ENCODE measurements at regions of chr1 and their contacts with region 1.

Region 1: GRCh38 chr1:54488779-54489626 is 59.0 kb upstream of the ACOT11 start:
- DNase-seq: peak; percentile 80
- H3K4me3 ChIP-seq: peak overlapping the region; percentile 41 to 85 (median 66)
- H3K27ac ChIP-seq: peak overlapping the region; percentile 87
- H3K4me1 ChIP-seq: peaks cover 17% of the 10 kb centered on the region
- H3K27me3 ChIP-seq: no peaks in the 10 kb centered on the region
- CTCF ChIP-seq: peak; percentile 88 to 91
- POLR2A ChIP-seq: no peak

Region 2: GRCh38 chr1:53945433-53946251 is 543.4 kb before region 1 on chr1 and contains the start of gene IFT25:
- CTCF ChIA-PET with region 1: no interaction called
- POLR2A ChIA-PET with region 1: no interaction called
- dilution Hi-C with region 1: no loop called
- intact Hi-C with region 1: loop called (anchors 2 kb)
- DNase-seq: peak; percentile 95
- H3K4me3 ChIP-seq: peak within 1 kb of the TSS; percentile 88 to 95 (median 91)
- H3K27ac ChIP-seq: peak within 1 kb of the TSS; percentile 43
- H3K4me1 ChIP-seq: peaks cover 20% of the 10 kb centered on the region
- H3K27me3 ChIP-seq: no peaks in the 10 kb centered on the region
- CTCF ChIP-seq: no peak
- POLR2A ChIP-seq: peak; percentile 77
- total RNA-seq, gene IFT25: 31.4 and 34.0 TPM in 2 replicates

Region 3: GRCh38 chr1:54121482-54122134 is 367.4 kb before region 1 on chr1:
- CTCF ChIA-PET with region 1: interaction called, 122 read pairs
- POLR2A ChIA-PET with region 1: no interaction called
- dilution Hi-C with region 1: no loop called
- intact Hi-C with region 1: loop called (anchors 1 kb)
- DNase-seq: peak; percentile 74
- H3K4me3 ChIP-seq: peak overlapping the region in 1 of 3 experiments; percentile 2
- H3K27ac ChIP-seq: no peak overlapping the region
- H3K4me1 ChIP-seq: peaks cover 3% of the 10 kb centered on the region
- H3K27me3 ChIP-seq: no peaks in the 10 kb centered on the region
- CTCF ChIP-seq: peak; percentile 77 to 88
- POLR2A ChIP-seq: no peak

Region 4: DNA sequence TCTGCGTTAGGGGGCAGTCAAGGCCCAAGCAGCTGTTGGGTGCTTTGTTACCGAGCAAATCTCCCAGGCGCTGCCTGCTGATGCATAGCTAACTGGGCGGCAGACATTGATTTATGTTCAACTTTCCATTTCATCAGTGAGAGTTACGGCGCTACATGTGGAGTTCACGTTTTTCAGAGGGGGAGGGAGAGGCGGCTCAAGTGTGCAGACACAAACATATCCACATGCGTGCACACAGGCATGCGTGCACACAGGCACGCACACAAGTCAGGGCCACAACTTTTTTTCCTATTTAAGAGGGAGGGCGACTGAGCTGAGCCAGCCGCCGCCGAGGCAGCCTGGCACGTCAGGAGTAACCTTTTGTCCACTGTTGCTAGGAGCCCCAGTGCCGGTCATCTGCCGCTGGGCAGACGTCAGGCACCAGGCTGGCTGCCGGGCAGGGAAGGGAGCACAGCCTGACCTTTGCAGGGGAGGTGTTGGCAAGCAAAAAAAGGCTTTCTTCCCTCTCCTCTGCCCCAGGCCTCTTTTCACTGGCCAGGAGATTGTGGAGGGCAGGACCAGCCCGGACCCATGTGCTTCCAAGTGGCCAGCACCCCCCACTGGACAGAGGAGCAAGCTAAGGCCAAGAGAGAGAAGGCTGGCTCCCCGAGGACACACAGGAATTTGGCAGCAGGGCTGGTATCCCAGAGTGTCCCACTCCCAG is 215.8 kb before region 1 on chr1:
- CTCF ChIA-PET with region 1: interaction called, 13 read pairs
- POLR2A ChIA-PET with region 1: no interaction called
- dilution Hi-C with region 1: no loop called
- intact Hi-C with region 1: loop called (anchors 1 kb)
- DNase-seq: peak; percentile 82
- H3K4me3 ChIP-seq: no peak overlapping the region
- H3K27ac ChIP-seq: peak overlapping the region; percentile 30
- H3K4me1 ChIP-seq: peaks cover 19% of the 10 kb centered on the region
- H3K27me3 ChIP-seq: no peaks in the 10 kb centered on the region
- CTCF ChIP-seq: peak; percentile 7 to 62
- POLR2A ChIP-seq: no peak

Region 5: DNA sequence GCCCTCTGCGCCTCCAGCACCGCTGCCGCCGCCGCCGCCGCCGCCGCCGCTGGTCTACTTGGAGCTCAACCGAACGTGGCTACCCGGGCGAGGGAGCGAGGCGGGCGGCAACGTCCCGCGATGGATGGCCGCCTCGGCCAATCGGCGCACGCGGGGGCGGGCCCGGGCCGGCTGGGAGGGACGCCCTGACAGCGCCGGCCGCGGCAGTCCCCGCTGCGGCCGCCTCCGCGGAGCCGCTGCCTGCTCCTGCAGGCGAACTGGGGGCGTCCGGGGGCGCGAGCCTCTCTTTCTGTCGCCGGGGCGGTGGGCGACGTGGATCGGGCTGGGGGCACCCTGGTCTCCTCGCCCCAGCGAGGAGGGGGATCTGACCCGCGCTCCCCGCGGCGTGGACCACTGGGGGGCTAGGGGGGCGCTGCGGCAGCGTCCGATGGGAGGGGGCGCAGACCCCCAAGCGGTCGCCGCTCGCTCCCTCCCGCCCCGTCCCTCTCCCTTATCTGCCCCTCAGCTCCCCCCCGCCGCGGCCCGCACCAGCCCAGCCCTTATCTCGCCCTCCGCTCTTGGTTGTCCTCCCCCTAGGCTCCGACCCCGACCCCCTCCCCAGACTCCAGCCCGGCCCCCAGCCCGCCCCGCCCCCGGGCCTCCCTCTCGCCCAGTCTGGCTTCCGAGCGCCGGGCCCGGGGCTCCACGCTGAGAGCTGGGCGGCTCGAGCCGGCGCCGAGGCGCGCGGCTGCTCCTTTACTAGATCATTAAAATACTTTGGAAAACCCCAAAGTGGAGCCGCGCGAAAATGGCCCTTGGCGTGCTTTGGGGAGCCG is 82.5 kb before region 1 on chr1 and contains the start of gene SSBP3:
- CTCF ChIA-PET with region 1: interaction called, 109 read pairs
- POLR2A ChIA-PET with region 1: interaction called, 9 read pairs
- dilution Hi-C with region 1: no loop called
- intact Hi-C with region 1: loop called (anchors 1 kb)
- DNase-seq: peak; percentile 95
- H3K4me3 ChIP-seq: peak within 1 kb of the TSS; percentile 71 to 85 (median 80)
- H3K27ac ChIP-seq: peak within 1 kb of the TSS; percentile 61
- H3K4me1 ChIP-seq: peaks cover 41% of the 10 kb centered on the region
- H3K27me3 ChIP-seq: no peaks in the 10 kb centered on the region
- CTCF ChIP-seq: peak in 1 of 2 donors; percentile 6
- POLR2A ChIP-seq: no peak
- total RNA-seq, gene SSBP3: 49.5 and 59.4 TPM in 2 replicates

Region 6: GRCh38 chr1:54499360-54500106 is 10.5 kb after region 1 on chr1:
- CTCF ChIA-PET with region 1: interaction called, 26 read pairs
- POLR2A ChIA-PET with region 1: no interaction called
- dilution Hi-C with region 1: no loop called
- intact Hi-C with region 1: no loop called
- DNase-seq: peak; percentile 43
- H3K4me3 ChIP-seq: peak overlapping the region; percentile 17 to 27 (median 26)
- H3K27ac ChIP-seq: no peak overlapping the region
- H3K4me1 ChIP-seq: peaks cover 4% of the 10 kb centered on the region
- H3K27me3 ChIP-seq: peaks cover 8 to 9% of the 10 kb centered on the region in 2 experiments
- CTCF ChIP-seq: peak in 1 of 2 donors; percentile 51
- POLR2A ChIP-seq: no peak

Region 7: GRCh38 chr1:54738244-54738643 is 249.2 kb after region 1 on chr1:
- CTCF ChIA-PET with region 1: no interaction called
- POLR2A ChIA-PET with region 1: no interaction called
- dilution Hi-C with region 1: no loop called
- intact Hi-C with region 1: no loop called
- DNase-seq: no peak
- H3K4me3 ChIP-seq: no peak overlapping the region
- H3K27ac ChIP-seq: no peak overlapping the region
- H3K4me1 ChIP-seq: no peaks in the 10 kb centered on the region
- H3K27me3 ChIP-seq: no peaks in the 10 kb centered on the region
- CTCF ChIP-seq: no peak
- POLR2A ChIP-seq: no peak

Measured in endothelial cell of umbilical vein (primary cell).